Activated CD4-positive, alpha-beta memory T cell treated with anti-CD3 and anti-CD28 coated beads, Interleukin-2, amount 10 ng/mL, durations not matched to agents 7 days and 5 days (primary cell): ENCODE measurements at regions of chr16 and their contacts with region 1.

Region 1: DNA sequence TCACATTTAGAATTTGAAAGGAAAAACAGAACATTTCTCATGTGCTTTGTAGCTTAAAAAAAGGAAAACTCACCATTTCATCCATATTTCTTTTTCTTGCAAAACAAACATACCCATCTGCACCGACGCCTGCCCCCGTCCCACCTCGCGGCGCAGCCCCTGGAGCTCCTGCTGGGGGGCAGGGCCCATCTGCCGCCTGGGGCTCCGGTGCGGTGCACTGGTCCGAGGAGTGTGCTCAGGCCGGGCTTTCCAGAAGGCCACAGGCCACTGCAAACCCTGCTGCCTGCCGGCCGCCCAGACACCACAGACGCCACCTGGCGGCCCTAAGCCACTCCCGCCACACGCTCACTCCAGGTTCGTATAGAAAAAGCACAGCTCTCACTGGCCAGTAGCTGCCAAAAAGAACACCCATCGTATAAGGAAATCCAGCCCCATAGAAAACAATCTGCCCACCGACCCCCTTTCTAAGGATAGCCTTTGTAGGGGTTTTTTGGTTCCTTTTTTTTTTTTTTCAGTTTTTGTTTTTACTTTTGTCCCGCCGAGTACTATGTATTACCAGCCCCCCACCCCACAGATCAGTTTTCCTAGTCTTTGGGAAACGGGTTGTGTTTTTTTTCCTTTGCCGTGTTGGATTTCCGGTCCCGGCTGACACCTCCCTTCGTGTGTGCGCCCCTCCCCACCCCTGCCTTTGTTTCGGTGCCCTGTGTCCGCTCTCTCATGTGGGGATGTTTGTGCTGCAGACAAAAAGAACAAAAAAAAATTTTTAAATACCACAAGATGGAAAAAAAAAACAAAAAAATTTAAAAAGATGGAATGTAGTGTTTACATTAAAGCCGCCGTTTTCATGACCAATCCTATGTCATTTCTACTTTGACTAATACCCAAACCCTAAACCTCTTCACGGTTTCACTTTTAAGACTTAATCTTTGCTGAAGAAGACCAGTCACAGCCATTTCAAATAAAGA is 68.8 kb downstream of the AMFR start:
- DNase-seq: peak; percentile 70
- H3K4me3 Mint-ChIP-seq: peak overlapping the region; percentile 75
- H3K27ac Mint-ChIP-seq: peak overlapping the region; percentile 88
- H3K4me1 Mint-ChIP-seq: peaks cover 22% of the 10 kb centered on the region
- H3K27me3 Mint-ChIP-seq: no peaks in the 10 kb centered on the region

Region 2: GRCh38 chr16:56108056-56108471 is 248.5 kb before region 1 on chr16:
- CTCF ChIA-PET with region 1: no interaction called
- POLR2A ChIA-PET with region 1: no interaction called
- DNase-seq: no peak
- H3K4me3 Mint-ChIP-seq: no peak overlapping the region
- H3K27ac Mint-ChIP-seq: no peak overlapping the region
- H3K4me1 Mint-ChIP-seq: no peaks in the 10 kb centered on the region
- H3K27me3 Mint-ChIP-seq: no peaks in the 10 kb centered on the region

Region 3: GRCh38 chr16:56317998-56318826 is 38.3 kb before region 1 on chr16:
- CTCF ChIA-PET with region 1: interaction called, 10 read pairs
- POLR2A ChIA-PET with region 1: no interaction called
- DNase-seq: peak; percentile 81
- H3K4me3 Mint-ChIP-seq: no peak overlapping the region
- H3K27ac Mint-ChIP-seq: no peak overlapping the region
- H3K4me1 Mint-ChIP-seq: peaks cover 5% of the 10 kb centered on the region
- H3K27me3 Mint-ChIP-seq: peaks cover 5% of the 10 kb centered on the region

Region 4: DNA sequence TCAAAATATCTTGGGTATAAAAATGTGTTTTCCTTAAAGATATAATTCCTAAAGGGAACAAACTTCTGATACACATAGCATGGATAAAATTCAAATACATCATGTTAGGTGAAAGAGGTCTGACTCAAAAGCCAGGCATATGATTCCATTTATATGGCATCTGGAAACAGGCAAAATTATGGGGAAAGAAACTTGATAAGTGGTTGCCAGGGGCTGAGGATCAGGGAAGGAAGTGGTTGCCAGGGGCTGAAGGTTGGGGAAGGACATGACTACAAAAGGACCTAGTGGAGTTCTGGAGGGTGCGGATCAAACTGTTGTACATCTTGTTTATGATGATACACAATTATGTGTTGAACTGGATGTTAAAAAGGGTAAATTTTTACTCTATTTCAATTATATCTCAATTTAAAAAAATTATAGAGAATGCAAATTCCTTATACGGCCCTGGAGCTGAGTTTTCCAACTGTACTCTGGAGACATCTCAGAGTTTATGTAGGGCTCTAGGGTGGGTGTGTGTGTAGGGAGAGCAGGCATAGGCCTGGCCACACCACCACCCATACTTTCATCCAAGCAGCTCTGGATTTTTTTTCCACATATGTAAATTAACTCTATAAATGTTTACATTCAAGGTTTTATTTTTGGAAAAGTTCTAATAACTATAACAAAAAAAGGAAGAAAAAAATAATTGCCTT is 13.8 kb after region 1 on chr16:
- CTCF ChIA-PET with region 1: interaction called, 10 read pairs
- POLR2A ChIA-PET with region 1: no interaction called
- DNase-seq: no peak
- H3K4me3 Mint-ChIP-seq: no peak overlapping the region
- H3K27ac Mint-ChIP-seq: no peak overlapping the region
- H3K4me1 Mint-ChIP-seq: peaks cover 13% of the 10 kb centered on the region
- H3K27me3 Mint-ChIP-seq: no peaks in the 10 kb centered on the region